ENCODE measurements at regions of chr13 and their contacts with region 1.

Region 1: DNA sequence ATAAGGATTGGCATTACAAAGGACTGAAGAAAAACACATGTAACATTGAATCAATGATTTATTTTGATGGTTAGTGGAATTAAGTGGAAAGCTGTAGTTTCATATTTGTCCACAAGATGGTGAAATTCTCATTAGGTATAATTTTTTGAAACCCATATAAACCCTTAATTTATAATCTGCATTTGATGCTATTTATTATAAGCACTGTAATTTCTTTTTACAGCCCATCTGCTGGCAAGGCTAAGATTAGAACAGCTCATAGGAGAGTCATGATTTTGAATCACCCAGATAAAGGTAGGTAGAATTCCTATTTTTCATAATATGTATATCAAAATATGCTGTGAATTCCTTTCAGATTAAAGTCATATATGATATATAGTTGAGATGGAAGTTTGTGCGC is 62.2 kb downstream of the DNAJC15 start:
- DNase-seq: no peak
- ATAC-seq: no peak

Region 2: DNA sequence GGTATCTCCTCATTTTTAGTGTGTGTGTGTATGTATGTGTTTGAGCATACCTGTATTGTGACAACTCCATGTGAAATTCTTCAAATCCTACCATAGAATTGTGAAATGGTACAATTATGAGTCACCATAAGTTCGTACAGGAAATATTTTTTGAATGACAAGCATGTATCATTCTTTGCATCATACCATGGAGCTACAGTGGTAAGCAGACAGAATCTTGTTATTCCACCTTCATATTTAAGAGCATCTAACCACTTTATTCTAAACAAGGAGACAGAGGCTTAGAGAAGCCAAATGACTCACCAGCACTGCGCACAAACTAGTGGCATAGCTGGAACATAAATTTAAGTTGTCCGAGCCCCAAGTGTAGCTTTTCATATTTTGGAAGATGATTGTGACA is 89.0 kb before region 1 on chr13:
- intact Hi-C with region 1: no loop called
- DNase-seq: no peak
- ATAC-seq: no peak

Region 3: GRCh38 chr13:43878892-43879754 is 793.6 kb after region 1 on chr13 and contains the start of gene CCDC122:
- intact Hi-C with region 1: loop called (anchors 10 kb)
- DNase-seq: peak; percentile 96
- ATAC-seq: peak; percentile 91
- total RNA-seq, gene CCDC122: 2.6 TPM